A673 (cell line): ENCODE measurements at regions of chr3 and their contacts with region 1.

Region 1: GRCh38 chr3:50350527-50351322 is at the starts of genes CYB561D2 and NPRL2:
- DNase-seq: peak; percentile 92
- H3K4me3 ChIP-seq: peak within 1 kb of the TSS; percentile 72
- H3K27ac ChIP-seq: peak within 1 kb of the TSS; percentile 92
- H3K4me1 ChIP-seq: peaks cover 8% of the 10 kb centered on the region
- H3K27me3 ChIP-seq: no peaks in the 10 kb centered on the region
- CTCF ChIP-seq: no peak
- total RNA-seq, gene CYB561D2: 7.9 and 8.2 TPM in 2 replicates
- total RNA-seq, gene NPRL2: 15.2 and 16.0 TPM in 2 replicates

Region 2: DNA sequence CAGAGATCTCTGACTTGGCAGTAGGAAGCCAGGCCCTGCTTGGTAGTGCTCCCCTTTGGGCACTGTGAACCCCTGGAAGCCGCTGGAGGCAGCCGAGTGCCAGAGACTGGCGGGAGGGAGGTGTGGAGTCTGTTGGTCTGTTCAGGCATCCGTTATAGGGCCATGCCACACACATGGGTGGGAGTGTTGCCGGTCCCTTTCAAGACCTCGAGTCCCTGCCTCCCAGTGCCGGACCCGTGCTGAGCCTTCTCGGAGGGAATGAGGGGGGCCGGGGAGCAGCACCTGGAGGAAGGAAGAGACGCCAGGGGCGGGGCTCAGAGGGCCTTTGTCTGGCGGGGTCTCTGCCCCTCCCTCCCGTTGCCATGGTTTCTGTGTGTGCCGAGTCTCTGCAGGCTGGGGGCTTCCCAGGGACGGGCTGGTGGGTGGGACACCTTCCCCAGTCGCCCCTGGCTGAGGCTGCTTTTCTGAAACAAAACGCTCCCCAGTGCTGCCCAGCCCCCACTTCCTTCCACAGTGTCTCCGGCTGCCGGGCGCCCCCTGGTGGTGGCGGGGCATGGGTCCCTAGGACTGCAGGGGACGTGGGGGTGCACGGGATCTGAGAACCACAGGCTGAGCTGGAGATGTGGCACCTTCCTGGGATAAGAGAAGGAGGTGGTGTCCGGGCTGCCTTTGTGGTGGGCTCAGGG is 104.8 kb before region 1 on chr3:
- CTCF ChIA-PET with region 1: no interaction called
- POLR2A ChIA-PET with region 1: no interaction called
- intact Hi-C with region 1: no loop called
- DNase-seq: peak; percentile 85
- H3K4me3 ChIP-seq: peak overlapping the region; percentile 42
- H3K27ac ChIP-seq: peak overlapping the region; percentile 74
- H3K4me1 ChIP-seq: peaks cover 18% of the 10 kb centered on the region
- H3K27me3 ChIP-seq: no peaks in the 10 kb centered on the region
- CTCF ChIP-seq: peak; percentile 85

Region 3: GRCh38 chr3:50550079-50550741 is 199.5 kb after region 1 on chr3:
- CTCF ChIA-PET with region 1: no interaction called
- POLR2A ChIA-PET with region 1: no interaction called
- intact Hi-C with region 1: loop called (anchors 2 kb)
- DNase-seq: peak; percentile 45
- H3K4me3 ChIP-seq: no peak overlapping the region
- H3K27ac ChIP-seq: no peak overlapping the region
- H3K4me1 ChIP-seq: no peaks in the 10 kb centered on the region
- H3K27me3 ChIP-seq: no peaks in the 10 kb centered on the region
- CTCF ChIP-seq: peak; percentile 55